AG04450 (cell line): ENCODE measurements at regions of chr13 and their contacts with region 1.

Region 1: DNA sequence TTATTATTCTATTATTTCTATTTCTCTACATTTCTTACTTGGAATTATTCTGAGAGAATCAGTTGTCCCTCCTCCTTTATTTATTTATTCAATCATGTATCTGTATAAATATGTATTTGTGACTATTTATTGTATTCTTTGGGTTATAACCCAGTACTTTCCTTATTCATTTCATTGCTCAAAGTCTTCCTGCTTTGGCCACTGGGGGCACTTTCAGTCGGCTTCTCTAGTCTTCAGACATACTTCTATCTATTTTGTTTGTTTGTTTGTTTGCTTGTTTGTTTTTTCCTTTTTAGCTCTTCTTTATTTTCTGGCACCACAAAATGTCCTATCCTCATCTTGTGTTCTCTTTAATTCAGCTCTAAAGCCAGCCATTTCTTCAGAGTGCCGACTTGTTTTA is 260.4 kb downstream of the NALCN start:
- DNase-seq: no peak
- H3K4me3 ChIP-seq: no peak overlapping the region
- H3K27ac ChIP-seq: no peak overlapping the region
- H3K27me3 ChIP-seq: no peaks in the 10 kb centered on the region
- CTCF ChIP-seq: peak; percentile 54

Region 2: GRCh38 chr13:101120007-101120406 is 35.9 kb before region 1 on chr13:
- CTCF ChIA-PET with region 1: no interaction called
- POLR2A ChIA-PET with region 1: no interaction called
- DNase-seq: no peak
- H3K4me3 ChIP-seq: no peak overlapping the region
- H3K27ac ChIP-seq: no peak overlapping the region
- H3K27me3 ChIP-seq: no peaks in the 10 kb centered on the region
- CTCF ChIP-seq: no peak

Region 3: DNA sequence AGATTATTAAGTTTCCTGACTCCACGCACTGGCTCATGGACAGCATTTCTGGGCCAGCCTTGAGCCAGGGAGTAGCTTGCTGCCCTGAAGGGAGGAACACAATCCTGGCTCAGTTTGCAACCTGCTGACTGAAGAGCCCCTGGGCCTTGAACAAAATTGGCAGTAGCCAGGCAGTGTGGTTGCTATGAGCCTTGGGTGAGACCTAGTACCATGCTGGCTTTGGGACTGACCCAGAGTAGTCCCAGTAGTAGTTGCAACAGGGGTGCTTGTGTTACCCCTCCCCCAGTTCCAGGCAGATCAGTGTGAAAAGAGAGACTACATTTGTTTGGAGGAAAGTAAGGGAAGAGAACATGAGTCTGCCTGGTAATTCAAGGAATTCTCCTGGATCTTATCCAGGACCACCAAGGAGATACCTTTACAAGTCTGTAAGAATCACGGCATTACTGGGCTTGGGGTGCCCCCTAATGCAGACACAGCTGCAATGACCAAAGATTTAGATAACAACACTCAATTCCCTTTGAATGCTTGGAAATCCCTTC is 318.6 kb after region 1 on chr13:
- CTCF ChIA-PET with region 1: interaction called, 66 read pairs
- POLR2A ChIA-PET with region 1: no interaction called
- DNase-seq: peak; percentile 90
- H3K4me3 ChIP-seq: no peak overlapping the region
- H3K27ac ChIP-seq: peak overlapping the region; percentile 11
- H3K27me3 ChIP-seq: no peaks in the 10 kb centered on the region
- CTCF ChIP-seq: peak; percentile 78